Psoas muscle (tissue), 8 donors: ENCODE measurements at regions of chr13 and their contacts with region 1.

Region 1: DNA sequence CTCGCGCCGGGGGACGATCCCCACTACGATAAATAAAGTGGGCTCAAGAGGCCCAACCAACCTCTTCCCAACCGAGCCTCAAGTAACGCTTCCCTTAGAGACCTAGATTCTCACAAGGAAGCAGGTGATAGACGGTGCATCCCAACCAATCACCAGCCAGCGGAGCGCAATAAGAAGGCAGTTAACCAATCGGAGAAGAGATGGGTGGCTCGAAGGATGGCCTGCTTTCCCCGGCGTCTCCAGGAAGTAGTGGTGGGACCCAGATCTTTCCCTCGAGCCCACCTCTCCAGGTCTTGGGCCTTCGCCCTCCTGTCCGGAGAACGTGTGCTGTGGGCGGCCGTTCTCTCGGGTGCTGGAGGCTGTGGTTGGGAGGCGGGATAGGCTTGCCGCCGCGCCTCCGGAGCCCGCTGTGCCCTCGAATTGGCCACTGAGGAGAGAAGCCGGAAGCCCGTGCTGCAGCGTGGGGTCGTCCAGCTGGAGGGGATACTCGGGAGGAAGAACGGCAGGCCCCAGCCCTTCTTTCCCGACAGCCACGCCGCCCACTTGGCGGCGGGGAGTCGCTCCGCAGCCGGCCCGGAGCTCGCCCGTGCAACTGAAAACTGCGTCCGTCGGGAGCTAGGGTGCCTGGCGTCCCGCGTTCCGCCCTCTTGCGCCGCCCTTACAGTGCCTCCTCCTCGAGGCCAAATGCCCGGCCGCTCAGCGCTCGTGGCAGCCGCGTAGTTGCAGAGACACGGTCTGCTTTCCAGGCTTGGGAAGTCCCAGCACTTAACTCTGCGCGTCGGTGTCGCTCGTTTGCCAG is at the start of gene RNF6:
- DNase-seq: peak; percentile 91 to 95
- ATAC-seq: peak; percentile 97 to 98 (median 98)
- H3K4me3 ChIP-seq: peak within 1 kb of the TSS; percentile 94
- H3K27ac ChIP-seq: peak within 1 kb of the TSS; percentile 99
- H3K4me1 ChIP-seq: peaks cover 27% of the 10 kb centered on the region
- H3K27me3 ChIP-seq: no peaks in the 10 kb centered on the region
- CTCF ChIP-seq: no peak
- total RNA-seq, gene RNF6: 45.1 to 50.8 (median 45.7) TPM

Region 2: GRCh38 chr13:26253787-26254582 is 32.1 kb after region 1 on chr13 and contains the start of gene CDK8:
- intact Hi-C with region 1: loop called in 1 of 2 experiments (anchors 1 kb)
- DNase-seq: peak; percentile 94 to 97
- ATAC-seq: peak; percentile 91 to 94 (median 93)
- H3K4me3 ChIP-seq: peak within 1 kb of the TSS; percentile 96
- H3K27ac ChIP-seq: peak within 1 kb of the TSS; percentile 93
- H3K4me1 ChIP-seq: peaks cover 7% of the 10 kb centered on the region
- H3K27me3 ChIP-seq: no peaks in the 10 kb centered on the region
- CTCF ChIP-seq: no peak
- total RNA-seq, gene CDK8: 6.2 to 9.3 (median 8.6) TPM